ENCODE measurements at regions of chrX and their contacts with region 1.

Region 1: GRCh38 chrX:53422086-53422860 is at the start of gene SMC1A:
- DNase-seq: peak; percentile 100
- H3K4me3 ChIP-seq: peak within 1 kb of the TSS; percentile 53 to 62 (median 56)
- H3K27ac ChIP-seq: peak within 1 kb of the TSS; percentile 89 to 91 (median 90)
- H3K4me1 ChIP-seq: peaks cover 0 to 19% (median 12%) of the 10 kb centered on the region in 4 donors
- H3K27me3 ChIP-seq: no peaks in the 10 kb centered on the region
- CTCF ChIP-seq: no peak
- EP300 ChIP-seq: no peak
- POLR2A ChIP-seq: no peak
- total RNA-seq, gene SMC1A: 27.8 to 45.7 (median 35.5) TPM

Region 2: DNA sequence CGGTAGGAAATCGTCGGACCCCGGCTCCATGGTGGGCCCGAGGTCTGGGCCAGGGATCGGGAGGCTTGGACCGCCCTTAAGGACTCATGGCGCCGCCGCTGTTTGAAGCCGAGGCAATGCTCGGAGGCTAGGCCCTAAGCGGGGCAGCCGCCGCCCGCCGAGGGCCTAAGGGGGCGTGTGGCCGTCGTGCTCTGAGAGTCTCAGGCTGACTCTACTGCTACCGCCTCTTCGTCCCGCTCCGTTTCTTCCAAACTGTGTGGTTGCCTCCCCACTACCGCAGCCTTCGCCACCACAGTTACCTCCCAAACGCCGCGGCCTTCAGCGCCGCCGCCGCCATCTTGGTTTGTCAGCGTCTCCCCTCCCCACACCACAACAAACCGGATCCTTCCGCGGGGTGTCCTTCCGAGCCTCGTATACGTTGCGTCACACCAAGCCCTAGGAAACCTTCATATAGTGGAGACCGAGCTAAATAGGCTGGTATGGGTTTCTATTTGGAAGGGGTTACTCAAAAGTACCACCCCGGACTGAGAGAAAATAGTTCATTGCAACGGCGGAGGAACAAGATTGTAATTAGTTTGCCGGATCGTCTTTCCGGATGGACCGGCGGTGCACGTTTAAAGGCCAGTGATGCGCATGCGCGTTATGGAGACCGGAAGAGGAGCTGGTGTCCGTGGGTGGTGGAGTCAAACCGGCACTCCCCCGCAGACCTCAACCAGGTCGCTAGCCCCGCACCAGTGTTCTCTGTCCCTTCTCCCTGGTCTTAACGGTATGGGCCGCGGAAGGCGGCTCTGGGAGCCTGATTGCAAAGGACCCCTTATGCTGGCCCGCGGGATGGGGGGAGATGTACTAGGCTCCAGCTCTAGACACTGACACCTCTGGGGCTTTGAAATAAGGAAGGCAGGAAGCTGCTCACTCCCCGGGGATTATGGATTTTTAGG is 197.1 kb before region 1 on chrX and contains the start of gene KDM5C:
- intact Hi-C with region 1: loop called (anchors 1 kb)
- DNase-seq: peak; percentile 98
- H3K4me3 ChIP-seq: peak within 1 kb of the TSS; percentile 75 to 96 (median 90)
- H3K27ac ChIP-seq: peak within 1 kb of the TSS; percentile 84 to 89 (median 87)
- H3K4me1 ChIP-seq: peaks cover 0 to 46% (median 25%) of the 10 kb centered on the region in 4 donors
- H3K27me3 ChIP-seq: no peaks in the 10 kb centered on the region
- CTCF ChIP-seq: no peak
- EP300 ChIP-seq: no peak
- POLR2A ChIP-seq: peak; percentile 26 to 27
- total RNA-seq, gene KDM5C: 42.1 to 73.4 (median 69.2) TPM